ENCODE measurements at regions of chr17 and their contacts with region 1.

Region 1: GRCh38 chr17:1331708-1332107 is 52.2 kb downstream of the TRARG1 start:
- DNase-seq: no peak

Region 2: DNA sequence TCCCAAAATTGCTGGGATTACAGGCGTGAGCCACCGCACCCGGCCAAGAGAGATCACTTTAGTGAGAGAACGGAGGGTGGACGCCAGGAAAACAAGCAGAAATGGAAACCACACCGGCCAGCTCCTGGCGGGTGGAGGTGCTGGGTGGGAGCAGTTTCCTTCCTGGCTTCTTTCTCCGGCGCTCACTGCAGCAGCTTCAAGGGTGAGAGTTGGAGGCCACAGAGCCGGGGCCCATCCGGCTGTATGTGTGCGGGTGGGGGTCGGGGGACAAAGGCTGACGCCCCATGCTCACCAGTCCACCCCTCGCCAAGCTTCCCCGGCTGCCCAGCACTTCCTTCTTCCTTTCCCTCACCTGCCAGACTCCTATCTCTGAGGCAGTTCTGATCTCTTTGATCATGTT is 75.0 kb before region 1 on chr17:
- intact Hi-C with region 1: loop called (anchors 5 kb)
- DNase-seq: no peak

Region 3: GRCh38 chr17:1275962-1276736 is 55.6 kb before region 1 on chr17:
- intact Hi-C with region 1: loop called (anchors 5 kb)
- DNase-seq: no peak

Region 4: GRCh38 chr17:1374431-1375177 is 42.9 kb after region 1 on chr17:
- intact Hi-C with region 1: no loop called
- DNase-seq: no peak

Region 5: GRCh38 chr17:1532836-1533602 is 201.3 kb after region 1 on chr17:
- intact Hi-C with region 1: no loop called
- DNase-seq: no peak